ENCODE measurements at regions of chr3 and their contacts with region 1.

Region 1: GRCh38 chr3:122365073-122365472 is 18.0 kb downstream of the MIX23 start:
- DNase-seq: no peak
- ATAC-seq: peak; percentile 2; the same call in 1 of the 2 replicates
- H3K4me3 ChIP-seq: peak overlapping the region; percentile 13
- H3K27ac ChIP-seq: peak overlapping the region; percentile 91
- H3K4me1 ChIP-seq: peaks cover 30% of the 10 kb centered on the region
- H3K27me3 ChIP-seq: no peaks in the 10 kb centered on the region
- CTCF ChIP-seq: no peak

Region 2: GRCh38 chr3:122299872-122300460 is 65.1 kb before region 1 on chr3:
- CTCF ChIA-PET with region 1: no interaction called
- POLR2A ChIA-PET with region 1: no interaction called
- intact Hi-C with region 1: no loop called
- DNase-seq: peak; percentile 82
- ATAC-seq: peak; percentile 70
- H3K4me3 ChIP-seq: no peak overlapping the region
- H3K27ac ChIP-seq: no peak overlapping the region
- H3K4me1 ChIP-seq: peaks cover 6% of the 10 kb centered on the region
- H3K27me3 ChIP-seq: no peaks in the 10 kb centered on the region
- CTCF ChIP-seq: peak; percentile 70

Region 3: DNA sequence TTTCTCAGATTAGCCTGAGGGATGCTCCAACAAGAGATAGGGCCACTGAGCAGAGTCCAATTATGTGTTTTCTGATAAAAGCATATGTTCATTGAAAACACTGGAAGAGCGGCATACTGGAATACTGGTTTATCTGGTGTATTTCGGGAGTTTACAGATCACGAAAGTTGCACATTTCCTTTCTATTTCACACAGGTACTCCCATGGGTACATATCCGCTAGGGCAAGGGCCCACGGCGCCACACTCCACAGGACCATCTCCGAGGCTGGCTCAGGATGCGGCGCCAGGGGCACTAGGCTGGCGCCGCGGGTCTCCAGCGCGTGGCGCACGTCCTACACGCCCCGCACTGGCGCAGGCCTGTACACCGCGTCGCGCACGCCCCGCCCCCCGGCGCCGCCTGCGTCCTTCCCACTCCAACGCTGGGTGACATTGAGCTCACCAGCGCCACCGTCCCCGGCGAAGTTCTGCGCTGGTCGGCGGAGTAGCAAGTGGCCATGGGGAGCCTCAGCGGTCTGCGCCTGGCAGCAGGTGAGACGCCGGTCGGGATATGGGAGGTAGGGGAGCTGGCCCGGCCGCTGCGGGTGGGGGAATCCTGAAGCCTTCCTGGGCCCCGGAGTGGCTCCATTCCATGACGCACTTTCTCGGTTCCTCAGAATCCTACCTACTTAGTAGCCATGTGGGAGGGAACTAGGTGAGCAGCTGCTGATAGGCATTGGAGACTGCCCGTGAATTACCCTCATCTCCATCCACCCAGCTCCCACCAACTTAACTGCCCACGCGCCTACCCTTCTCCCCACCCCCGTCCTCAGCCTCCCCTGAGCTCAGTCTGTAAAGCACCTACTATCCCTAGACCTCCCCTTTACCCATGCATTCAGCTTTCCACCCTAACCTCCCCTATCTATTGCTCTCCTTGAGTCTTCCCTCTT is 19.0 kb after region 1 on chr3 and contains the start of gene FAM162A:
- CTCF ChIA-PET with region 1: no interaction called
- POLR2A ChIA-PET with region 1: interaction called, 5 read pairs
- intact Hi-C with region 1: loop called (anchors 1 kb)
- DNase-seq: peak; percentile 98
- ATAC-seq: peak; percentile 90
- H3K4me3 ChIP-seq: peak within 1 kb of the TSS; percentile 90
- H3K27ac ChIP-seq: peak within 1 kb of the TSS; percentile 40
- H3K4me1 ChIP-seq: peaks cover 44% of the 10 kb centered on the region
- H3K27me3 ChIP-seq: no peaks in the 10 kb centered on the region
- CTCF ChIP-seq: peak; percentile 83
- total RNA-seq, gene FAM162A: 86.4 and 126 TPM in 2 replicates